ENCODE measurements at regions of chr10 and their contacts with region 1.

Region 1: GRCh38 chr10:23438550-23439441 is at the start of gene OTUD1:
- DNase-seq: peak; percentile 93
- ATAC-seq: peak; percentile 84
- H3K4me3 Mint-ChIP-seq: peak within 1 kb of the TSS; percentile 76
- H3K27ac Mint-ChIP-seq: peak within 1 kb of the TSS; percentile 84
- H3K4me1 Mint-ChIP-seq: peaks cover 37% of the 10 kb centered on the region
- H3K27me3 Mint-ChIP-seq: peaks cover 2% of the 10 kb centered on the region
- total RNA-seq, gene OTUD1: 8.4 to 8.9 TPM

Region 2: GRCh38 chr10:23362879-23363792 is 75.7 kb before region 1 on chr10:
- CTCF ChIA-PET with region 1: interaction called, 4 read pairs
- POLR2A ChIA-PET with region 1: interaction called, 24 read pairs
- DNase-seq: peak; percentile 68
- ATAC-seq: peak; percentile 88
- H3K4me3 Mint-ChIP-seq: peak overlapping the region; percentile 65
- H3K27ac Mint-ChIP-seq: peak overlapping the region; percentile 97
- H3K4me1 Mint-ChIP-seq: peaks cover 54% of the 10 kb centered on the region
- H3K27me3 Mint-ChIP-seq: no peaks in the 10 kb centered on the region

Region 3: GRCh38 chr10:23368816-23369640 is 69.8 kb before region 1 on chr10:
- CTCF ChIA-PET with region 1: no interaction called
- POLR2A ChIA-PET with region 1: interaction called, 24 read pairs
- DNase-seq: peak; percentile 67
- ATAC-seq: peak; percentile 73
- H3K4me3 Mint-ChIP-seq: peak overlapping the region; percentile 55
- H3K27ac Mint-ChIP-seq: peak overlapping the region; percentile 88
- H3K4me1 Mint-ChIP-seq: peaks cover 69% of the 10 kb centered on the region
- H3K27me3 Mint-ChIP-seq: no peaks in the 10 kb centered on the region